CD8-positive, alpha-beta T cell (primary cell): ENCODE measurements at regions of chr9 and their contacts with region 1.

Region 1: DNA sequence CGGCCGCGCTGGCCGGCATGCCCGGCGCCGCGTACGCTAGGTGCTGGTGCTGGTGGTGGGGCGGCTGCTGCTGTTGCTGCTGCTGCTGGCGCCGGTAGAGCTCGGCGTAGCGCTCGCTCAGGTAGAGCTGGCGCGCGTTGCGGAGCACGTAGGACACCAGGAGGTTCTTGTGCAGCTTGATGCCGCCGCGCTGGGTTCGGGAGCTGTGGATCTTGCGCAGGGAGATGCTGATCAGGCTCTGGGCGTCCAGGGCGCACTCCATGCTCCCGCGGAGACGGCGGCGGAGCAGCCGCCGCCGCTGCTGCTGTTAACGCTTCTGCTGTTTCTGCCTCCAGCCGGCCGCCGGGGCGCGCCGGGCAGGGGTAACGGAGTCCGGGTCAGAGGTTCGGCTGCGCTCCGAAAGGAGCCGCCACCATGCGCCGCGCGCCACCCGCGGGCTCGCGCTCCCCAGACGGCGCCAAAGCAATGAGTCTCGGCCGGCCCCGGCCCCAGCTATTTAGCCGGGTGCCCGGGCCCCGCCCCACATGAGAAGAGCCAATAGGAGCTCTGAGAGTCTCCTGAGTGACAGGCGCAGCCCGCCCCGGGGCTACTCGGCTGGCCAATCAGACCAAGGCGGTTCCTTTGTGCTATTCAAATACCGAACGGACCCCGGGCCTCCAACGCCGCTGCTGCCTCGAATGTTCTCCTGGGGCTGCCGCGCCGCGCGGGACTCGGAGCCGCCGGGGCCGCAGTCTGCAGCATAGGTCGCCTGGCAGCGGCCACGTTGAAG is at the start of gene IER5L:
- DNase-seq: peak; percentile 89 to 97 (median 93)
- ATAC-seq: peak; percentile 85
- H3K4me3 ChIP-seq: peak within 1 kb of the TSS; percentile 70 to 86
- H3K4me3 Mint-ChIP-seq: peak within 1 kb of the TSS; percentile 92
- H3K27ac ChIP-seq: peak within 1 kb of the TSS in 1 of 2 experiments; percentile 50
- H3K27ac Mint-ChIP-seq: peak within 1 kb of the TSS; percentile 82
- H3K4me1 ChIP-seq: peaks cover 8% of the 10 kb centered on the region
- H3K4me1 Mint-ChIP-seq: peaks cover 10% of the 10 kb centered on the region
- H3K27me3 ChIP-seq: peaks cover 0 to 6% of the 10 kb centered on the region in 2 experiments
- H3K27me3 Mint-ChIP-seq: no peaks in the 10 kb centered on the region
- CTCF ChIP-seq: no peak
- total RNA-seq, gene IER5L: 21.7 to 25.1 TPM

Region 2: DNA sequence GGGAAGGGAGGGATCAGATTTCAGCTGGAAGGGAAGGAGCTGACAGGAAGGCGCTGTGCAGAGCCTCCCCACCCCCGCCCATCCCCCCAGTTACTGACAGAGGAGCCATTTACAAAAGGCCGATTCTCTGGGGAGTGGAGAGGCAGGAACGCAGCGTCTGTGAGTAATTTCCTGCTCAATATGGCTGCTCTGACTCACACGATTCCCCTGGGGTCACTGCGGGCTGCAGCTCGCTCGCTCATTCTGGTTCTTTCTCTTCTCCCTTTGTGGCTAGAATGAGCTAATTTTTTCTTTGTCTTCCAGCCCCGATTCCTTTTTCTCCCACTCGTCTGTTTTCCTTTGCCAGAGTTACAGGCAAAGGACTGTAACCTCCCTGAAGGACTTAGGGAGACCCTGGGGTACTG is 38.0 kb before region 1 on chr9:
- CTCF ChIA-PET with region 1: interaction called, 95 read pairs
- POLR2A ChIA-PET with region 1: interaction called, 4 read pairs
- intact Hi-C with region 1: loop called (anchors 1 kb)
- DNase-seq: peak; percentile 35 to 92 (median 80)
- ATAC-seq: peak; percentile 89
- H3K4me3 ChIP-seq: peak overlapping the region; percentile 55 to 58
- H3K4me3 Mint-ChIP-seq: peak overlapping the region; percentile 90
- H3K27ac ChIP-seq: peak overlapping the region; percentile 86 to 94
- H3K27ac Mint-ChIP-seq: peak overlapping the region; percentile 95
- H3K4me1 ChIP-seq: peaks cover 36% of the 10 kb centered on the region
- H3K4me1 Mint-ChIP-seq: peaks cover 34% of the 10 kb centered on the region
- H3K27me3 ChIP-seq: no peaks in the 10 kb centered on the region
- H3K27me3 Mint-ChIP-seq: no peaks in the 10 kb centered on the region
- CTCF ChIP-seq: no peak

Region 3: DNA sequence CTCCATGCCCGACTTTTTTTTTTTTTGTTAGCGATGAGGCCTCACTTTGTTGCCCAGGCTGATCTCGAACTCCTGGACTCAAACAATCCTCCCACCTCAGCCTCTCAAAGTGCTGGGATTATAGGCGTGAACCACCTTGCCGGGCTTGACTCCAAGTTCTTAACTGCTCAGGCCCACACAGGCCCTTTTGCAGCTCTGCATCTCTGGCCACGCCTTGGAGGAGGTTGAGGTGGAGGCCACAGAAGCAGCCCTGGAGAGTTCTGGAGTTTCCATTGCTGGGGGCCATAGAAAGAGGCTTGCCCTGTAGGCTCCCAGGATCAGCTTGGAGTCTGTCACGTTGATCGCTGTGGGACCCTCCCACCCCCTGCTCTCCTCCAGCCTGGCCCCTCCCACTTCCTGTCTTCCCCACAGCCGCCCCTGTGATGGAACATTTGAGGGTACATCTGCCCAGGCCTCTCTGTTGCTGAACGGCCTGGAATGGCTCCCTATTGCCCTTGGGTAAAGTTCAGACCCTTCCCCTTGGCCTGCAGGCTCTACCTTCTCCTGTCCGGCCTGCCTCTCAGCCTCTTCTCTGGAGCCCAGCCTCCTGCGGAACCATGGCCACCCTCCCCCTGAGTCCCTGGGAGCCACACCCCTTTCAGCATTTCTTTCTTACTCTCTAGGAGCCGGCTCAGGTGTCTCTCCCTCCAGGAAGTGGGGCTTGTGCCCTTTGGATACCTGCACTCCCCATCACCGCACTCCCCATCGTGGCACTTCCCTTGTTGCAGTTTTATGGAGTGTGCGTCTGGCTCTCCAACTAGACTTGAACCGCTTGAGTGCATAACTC is 30.4 kb after region 1 on chr9:
- CTCF ChIA-PET with region 1: interaction called, 6 read pairs
- POLR2A ChIA-PET with region 1: interaction called, 6 read pairs
- intact Hi-C with region 1: loop called in 1 of 2 experiments (anchors 1 kb)
- DNase-seq: peak in 8 of 9 experiments; percentile 45 to 77 (median 61)
- ATAC-seq: peak; percentile 72
- H3K4me3 ChIP-seq: peak overlapping the region; percentile 18 to 50
- H3K4me3 Mint-ChIP-seq: peak overlapping the region; percentile 86
- H3K27ac ChIP-seq: peak overlapping the region; percentile 38 to 57
- H3K27ac Mint-ChIP-seq: peak overlapping the region; percentile 83
- H3K4me1 ChIP-seq: peaks cover 48% of the 10 kb centered on the region
- H3K4me1 Mint-ChIP-seq: peaks cover 49% of the 10 kb centered on the region
- H3K27me3 ChIP-seq: no peaks in the 10 kb centered on the region
- H3K27me3 Mint-ChIP-seq: no peaks in the 10 kb centered on the region
- CTCF ChIP-seq: no peak

Region 4: GRCh38 chr9:129258124-129258822 is 80.3 kb after region 1 on chr9:
- CTCF ChIA-PET with region 1: interaction called, 5 read pairs
- POLR2A ChIA-PET with region 1: interaction called, 7 read pairs
- intact Hi-C with region 1: loop called (anchors 1 to 2 kb)
- DNase-seq: peak; percentile 77 to 96 (median 89)
- ATAC-seq: peak; percentile 88
- H3K4me3 ChIP-seq: peak overlapping the region; percentile 38 to 42
- H3K4me3 Mint-ChIP-seq: peak overlapping the region; percentile 75
- H3K27ac ChIP-seq: no peak overlapping the region
- H3K27ac Mint-ChIP-seq: no peak overlapping the region
- H3K4me1 ChIP-seq: peaks cover 24% of the 10 kb centered on the region
- H3K4me1 Mint-ChIP-seq: peaks cover 23% of the 10 kb centered on the region
- H3K27me3 ChIP-seq: peaks cover 0 to 3% of the 10 kb centered on the region in 2 experiments
- H3K27me3 Mint-ChIP-seq: peaks cover 5% of the 10 kb centered on the region
- CTCF ChIP-seq: no peak

Region 5: GRCh38 chr9:129383561-129384416 is 205.8 kb after region 1 on chr9:
- CTCF ChIA-PET with region 1: interaction called, 14 read pairs
- POLR2A ChIA-PET with region 1: interaction called, 17 read pairs
- intact Hi-C with region 1: loop called (anchors 1 to 2 kb)
- DNase-seq: peak; percentile 46 to 90 (median 77)
- ATAC-seq: peak; percentile 90
- H3K4me3 ChIP-seq: peak overlapping the region; percentile 46 to 64
- H3K4me3 Mint-ChIP-seq: peak overlapping the region; percentile 84
- H3K27ac ChIP-seq: peak overlapping the region; percentile 77 to 90
- H3K27ac Mint-ChIP-seq: peak overlapping the region; percentile 94
- H3K4me1 ChIP-seq: peaks cover 18% of the 10 kb centered on the region
- H3K4me1 Mint-ChIP-seq: peaks cover 15% of the 10 kb centered on the region
- H3K27me3 ChIP-seq: no peaks in the 10 kb centered on the region
- H3K27me3 Mint-ChIP-seq: no peaks in the 10 kb centered on the region
- CTCF ChIP-seq: peak; percentile 27

Region 6: DNA sequence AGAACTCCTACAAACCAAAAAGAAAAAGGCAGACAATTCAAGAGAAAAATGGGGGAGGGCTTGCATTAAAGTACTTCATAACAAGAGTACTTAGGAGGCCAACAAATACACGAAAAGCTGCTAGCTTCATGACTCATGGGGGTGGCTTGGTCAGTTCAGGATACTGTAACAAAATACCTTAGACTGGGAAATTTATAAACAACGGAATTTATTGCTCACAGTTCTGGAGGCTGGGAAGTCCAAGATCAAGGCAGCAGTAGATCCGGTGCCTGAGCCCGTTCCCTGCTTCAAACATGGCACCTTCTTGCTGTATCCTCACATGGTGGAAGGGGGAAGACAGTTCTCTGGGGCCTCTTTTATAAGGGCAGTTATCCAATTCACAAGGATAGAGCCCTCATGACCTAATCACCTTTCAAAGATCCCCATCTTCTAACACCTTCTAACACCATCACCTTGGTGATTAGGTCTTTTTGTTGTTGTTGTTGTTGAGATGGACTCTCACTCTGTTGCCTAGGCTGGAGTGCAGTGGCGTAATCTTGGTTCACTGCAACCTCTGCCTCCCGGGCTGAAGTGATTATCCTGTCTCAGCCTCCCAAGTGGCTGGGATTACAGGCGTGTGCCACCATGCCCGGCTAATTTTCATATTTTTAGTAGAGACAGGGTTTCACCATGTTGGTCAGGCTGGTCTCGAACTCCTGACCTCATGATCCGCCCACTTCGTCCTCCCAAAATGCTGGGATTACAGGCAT is 331.7 kb after region 1 on chr9:
- CTCF ChIA-PET with region 1: no interaction called
- POLR2A ChIA-PET with region 1: no interaction called
- intact Hi-C with region 1: no loop called
- DNase-seq: no peak
- ATAC-seq: no peak
- H3K4me3 ChIP-seq: no peak overlapping the region
- H3K4me3 Mint-ChIP-seq: no peak overlapping the region
- H3K27ac ChIP-seq: no peak overlapping the region
- H3K27ac Mint-ChIP-seq: no peak overlapping the region
- H3K4me1 ChIP-seq: no peaks in the 10 kb centered on the region
- H3K4me1 Mint-ChIP-seq: peaks cover under 1% of the 10 kb centered on the region
- H3K27me3 ChIP-seq: no peaks in the 10 kb centered on the region
- H3K27me3 Mint-ChIP-seq: no peaks in the 10 kb centered on the region
- CTCF ChIP-seq: no peak

Region 7: GRCh38 chr9:129610473-129611301 is 432.7 kb after region 1 on chr9:
- CTCF ChIA-PET with region 1: interaction called, 46 read pairs
- POLR2A ChIA-PET with region 1: interaction called, 4 read pairs
- intact Hi-C with region 1: loop called (anchors 1 kb)
- DNase-seq: peak; percentile 50 to 85 (median 75)
- ATAC-seq: peak; percentile 57
- H3K4me3 ChIP-seq: peak overlapping the region; percentile 36 to 77
- H3K4me3 Mint-ChIP-seq: peak overlapping the region; percentile 76
- H3K27ac ChIP-seq: no peak overlapping the region
- H3K27ac Mint-ChIP-seq: peak overlapping the region; percentile 69
- H3K4me1 ChIP-seq: peaks cover 25% of the 10 kb centered on the region
- H3K4me1 Mint-ChIP-seq: peaks cover 29% of the 10 kb centered on the region
- H3K27me3 ChIP-seq: no peaks in the 10 kb centered on the region
- H3K27me3 Mint-ChIP-seq: no peaks in the 10 kb centered on the region
- CTCF ChIP-seq: peak; percentile 93

Region 8: DNA sequence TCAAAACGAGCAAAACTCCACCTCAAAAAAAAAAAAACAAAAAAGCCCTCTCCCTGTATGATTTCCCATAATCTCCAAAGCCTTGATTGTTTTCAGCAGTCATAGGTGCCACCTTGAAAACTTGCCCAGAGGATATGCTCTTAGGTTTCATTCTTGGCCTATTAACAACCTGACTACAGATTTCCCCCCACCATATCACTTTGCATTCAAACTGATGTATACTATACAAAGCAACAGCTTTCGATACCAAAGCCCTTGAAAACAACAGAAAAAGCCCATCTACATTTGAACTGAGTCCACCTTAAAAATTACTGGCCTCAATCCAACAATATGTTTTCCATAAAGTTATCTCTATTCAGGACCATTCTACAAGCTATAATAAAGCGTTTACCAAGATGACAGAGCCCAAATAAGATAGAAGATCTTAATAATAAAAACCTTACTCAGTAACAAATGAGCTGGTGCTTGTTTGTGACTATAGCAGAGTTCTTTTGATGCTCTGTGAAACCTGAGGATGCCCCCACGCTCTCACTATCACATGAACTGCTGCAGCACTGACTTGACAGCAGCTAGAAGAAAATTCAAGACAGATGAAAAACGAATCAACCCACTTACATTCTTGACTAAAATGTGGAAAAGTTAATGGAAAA is 820.6 kb after region 1 on chr9:
- CTCF ChIA-PET with region 1: no interaction called
- POLR2A ChIA-PET with region 1: no interaction called
- intact Hi-C with region 1: no loop called
- DNase-seq: peak in 1 of 9 experiments; percentile 53
- ATAC-seq: peak; percentile 51
- H3K4me3 ChIP-seq: no peak overlapping the region
- H3K4me3 Mint-ChIP-seq: peak overlapping the region; percentile 35
- H3K27ac ChIP-seq: peak overlapping the region in 1 of 2 experiments; percentile 40
- H3K27ac Mint-ChIP-seq: peak overlapping the region; percentile 89
- H3K4me1 ChIP-seq: peaks cover 52% of the 10 kb centered on the region
- H3K4me1 Mint-ChIP-seq: peaks cover 73% of the 10 kb centered on the region
- H3K27me3 ChIP-seq: no peaks in the 10 kb centered on the region
- H3K27me3 Mint-ChIP-seq: no peaks in the 10 kb centered on the region
- CTCF ChIP-seq: no peak